GM12878 (cell line): ENCODE measurements at regions of chr11 and their contacts with region 1.

Region 1: GRCh38 chr11:80727315-80728230 is 1286.7 kb upstream of the TENM4 start:
- DNase-seq: peak; percentile 5
- ATAC-seq: peak; percentile 95
- H3K4me3 ChIP-seq: no peak overlapping the region
- H3K27ac ChIP-seq: no peak overlapping the region
- H3K4me1 ChIP-seq: no peaks in the 10 kb centered on the region
- H3K27me3 ChIP-seq: no peaks in the 10 kb centered on the region; a peak in 1 of 4 replicates
- CTCF ChIP-seq: peak; percentile 45 to 53 (median 46); a peak in 5 of 6 replicates
- EP300 ChIP-seq: no peak
- POLR2A ChIP-seq: no peak
- RAD21 ChIP-seq: peak; percentile 67

Region 2: GRCh38 chr11:80393210-80393609 is 334.4 kb before region 1 on chr11:
- CTCF ChIA-PET with region 1: no interaction called
- POLR2A ChIA-PET with region 1: no interaction called
- RAD21 ChIA-PET with region 1: no interaction called
- SMC1A ChIA-PET with region 1: no interaction called
- in situ Hi-C with region 1: no loop called
- intact Hi-C with region 1: no loop called
- DNase-seq: no peak
- ATAC-seq: no peak
- H3K4me3 ChIP-seq: no peak overlapping the region
- H3K27ac ChIP-seq: no peak overlapping the region
- H3K4me1 ChIP-seq: no peaks in the 10 kb centered on the region
- H3K27me3 ChIP-seq: no peaks in the 10 kb centered on the region
- CTCF ChIP-seq: no peak
- EP300 ChIP-seq: no peak
- POLR2A ChIP-seq: no peak
- RAD21 ChIP-seq: no peak

Region 3: DNA sequence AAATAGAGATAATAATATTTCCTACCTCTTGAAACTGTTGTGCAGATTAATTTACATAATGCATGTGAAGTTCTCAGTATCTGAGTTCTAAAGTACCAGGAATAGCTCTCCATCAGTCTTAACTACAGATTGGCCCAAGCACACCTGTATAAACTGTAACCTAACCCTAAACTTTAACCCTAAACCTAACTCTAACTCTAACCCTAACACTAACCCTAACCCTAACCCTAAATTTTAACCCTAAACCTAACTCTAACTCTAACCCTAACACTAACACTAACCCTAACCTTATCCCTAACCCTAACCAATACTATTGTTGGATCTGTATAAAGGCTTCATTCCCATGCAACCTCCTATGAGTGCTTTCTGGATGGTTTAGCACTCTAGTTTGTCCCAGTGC is 159.1 kb after region 1 on chr11:
- CTCF ChIA-PET with region 1: no interaction called
- POLR2A ChIA-PET with region 1: no interaction called
- RAD21 ChIA-PET with region 1: no interaction called
- SMC1A ChIA-PET with region 1: no interaction called
- in situ Hi-C with region 1: no loop called
- intact Hi-C with region 1: no loop called
- DNase-seq: no peak
- ATAC-seq: no peak
- H3K4me3 ChIP-seq: no peak overlapping the region
- H3K27ac ChIP-seq: no peak overlapping the region
- H3K4me1 ChIP-seq: no peaks in the 10 kb centered on the region
- H3K27me3 ChIP-seq: no peaks in the 10 kb centered on the region
- CTCF ChIP-seq: no peak
- EP300 ChIP-seq: no peak
- POLR2A ChIP-seq: no peak
- RAD21 ChIP-seq: no peak

Region 4: DNA sequence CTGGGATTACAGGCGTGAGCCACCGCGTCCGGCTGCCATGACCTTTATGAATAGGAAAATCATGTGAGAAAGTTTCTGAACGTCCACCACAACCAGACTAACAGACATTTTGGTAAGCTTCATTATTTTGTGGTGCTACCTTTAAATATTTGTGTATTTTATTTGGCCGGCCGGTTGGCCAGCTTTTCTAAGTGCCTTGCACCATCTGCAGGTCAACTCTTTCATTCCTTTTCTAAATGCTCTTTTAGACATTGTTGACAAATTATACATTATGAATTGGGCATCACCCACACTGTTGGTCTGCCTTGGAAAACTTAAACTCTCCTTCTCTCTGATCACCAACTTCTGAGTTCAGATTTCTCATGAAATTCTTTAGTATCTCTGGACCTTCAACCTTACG is 235.9 kb after region 1 on chr11:
- CTCF ChIA-PET with region 1: interaction called, 3 read pairs
- POLR2A ChIA-PET with region 1: no interaction called
- RAD21 ChIA-PET with region 1: no interaction called
- SMC1A ChIA-PET with region 1: interaction called, 3 read pairs
- in situ Hi-C with region 1: no loop called
- intact Hi-C with region 1: loop called (anchors 5 kb)
- DNase-seq: no peak
- ATAC-seq: no peak; the same call in 2 of the 3 replicates
- H3K4me3 ChIP-seq: no peak overlapping the region
- H3K27ac ChIP-seq: no peak overlapping the region
- H3K4me1 ChIP-seq: no peaks in the 10 kb centered on the region
- H3K27me3 ChIP-seq: no peaks in the 10 kb centered on the region
- CTCF ChIP-seq: no peak; a peak in 1 of 6 replicates
- EP300 ChIP-seq: no peak
- POLR2A ChIP-seq: no peak
- RAD21 ChIP-seq: peak; percentile 49

Region 5: DNA sequence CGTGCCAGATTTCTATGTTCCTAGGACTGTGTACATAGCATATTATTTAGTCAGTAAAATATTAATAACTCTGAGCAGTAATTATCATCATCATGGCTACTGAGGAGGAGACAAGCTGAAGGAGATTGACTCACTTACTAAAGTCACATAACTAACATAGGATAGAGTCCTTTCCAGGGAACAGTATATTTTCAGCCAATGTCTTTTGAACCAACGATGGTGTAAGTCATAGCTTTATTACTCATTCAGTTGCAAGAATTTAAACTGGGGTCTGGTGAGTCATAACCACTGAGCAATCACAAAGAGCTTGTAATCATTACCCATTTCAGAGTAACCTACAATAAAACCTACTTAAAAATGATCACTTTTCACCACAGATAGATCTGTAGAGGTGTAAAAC is 278.0 kb after region 1 on chr11:
- CTCF ChIA-PET with region 1: no interaction called
- POLR2A ChIA-PET with region 1: no interaction called
- RAD21 ChIA-PET with region 1: no interaction called
- SMC1A ChIA-PET with region 1: no interaction called
- in situ Hi-C with region 1: no loop called
- intact Hi-C with region 1: loop called (anchors 5 kb)
- DNase-seq: no peak
- ATAC-seq: peak; percentile 82
- H3K4me3 ChIP-seq: no peak overlapping the region
- H3K27ac ChIP-seq: no peak overlapping the region
- H3K4me1 ChIP-seq: no peaks in the 10 kb centered on the region
- H3K27me3 ChIP-seq: no peaks in the 10 kb centered on the region
- CTCF ChIP-seq: no peak
- EP300 ChIP-seq: no peak
- POLR2A ChIP-seq: no peak
- RAD21 ChIP-seq: no peak

Region 6: DNA sequence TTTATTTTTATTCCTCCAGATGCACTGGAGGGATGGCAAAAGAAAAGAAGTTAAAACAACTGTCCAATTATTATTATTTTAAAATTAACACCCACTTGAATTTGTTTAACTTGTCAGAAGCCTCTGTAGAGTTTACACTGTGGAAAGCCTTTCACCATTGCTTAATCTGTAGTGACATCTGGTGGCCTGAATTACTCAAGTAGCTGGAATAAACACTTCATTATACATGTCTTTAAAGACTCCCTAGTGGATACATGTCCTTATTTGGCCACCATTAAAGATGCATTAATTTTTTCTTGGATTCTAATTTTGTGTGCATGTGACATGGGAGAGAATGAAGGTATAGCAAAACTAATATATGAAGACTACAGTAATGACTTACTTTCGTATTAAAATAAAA is 509.6 kb after region 1 on chr11:
- CTCF ChIA-PET with region 1: no interaction called
- POLR2A ChIA-PET with region 1: no interaction called
- RAD21 ChIA-PET with region 1: no interaction called
- SMC1A ChIA-PET with region 1: no interaction called
- in situ Hi-C with region 1: no loop called
- intact Hi-C with region 1: loop called (anchors 10 kb)
- DNase-seq: no peak
- ATAC-seq: peak; percentile 81
- H3K4me3 ChIP-seq: no peak overlapping the region
- H3K27ac ChIP-seq: no peak overlapping the region
- H3K4me1 ChIP-seq: no peaks in the 10 kb centered on the region
- H3K27me3 ChIP-seq: no peaks in the 10 kb centered on the region
- CTCF ChIP-seq: peak; percentile 23 to 58 (median 29); a peak in 4 of 6 replicates
- EP300 ChIP-seq: no peak
- POLR2A ChIP-seq: no peak
- RAD21 ChIP-seq: peak; percentile 78